ENCODE measurements at regions of chr15 and their contacts with region 1.

Region 1: DNA sequence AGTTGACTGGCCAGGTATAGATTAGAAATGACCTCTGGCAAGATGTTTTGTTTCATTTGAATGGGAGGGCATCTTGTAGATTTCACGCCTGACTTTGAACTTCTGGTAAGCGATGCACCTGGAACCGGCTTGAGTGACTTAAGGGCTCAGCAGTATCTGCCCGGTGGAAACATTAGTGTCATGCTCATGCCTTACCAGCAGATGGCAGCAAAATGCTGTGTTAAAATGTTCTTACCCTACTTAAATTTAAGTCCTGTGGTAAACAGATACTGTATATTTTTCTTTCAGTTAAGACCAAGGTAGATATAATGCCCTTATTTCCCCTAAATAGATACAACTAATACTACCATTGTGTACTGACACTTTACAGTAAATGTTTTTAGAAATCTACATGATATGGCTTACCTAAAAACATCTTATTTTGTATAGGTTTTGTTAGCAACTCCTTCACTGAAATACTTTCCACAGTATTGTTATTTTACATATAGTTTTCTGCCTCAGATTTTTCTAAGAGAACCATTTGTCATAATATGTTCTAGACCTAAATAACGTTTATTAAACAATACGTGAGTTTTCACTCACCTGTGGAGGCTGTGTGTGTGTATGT is 25.5 kb downstream of the ASB7 start:
- DNase-seq: no peak

Region 2: GRCh38 chr15:100508641-100509300 is 119.1 kb before region 1 on chr15:
- intact Hi-C with region 1: no loop called
- DNase-seq: no peak

Region 3: DNA sequence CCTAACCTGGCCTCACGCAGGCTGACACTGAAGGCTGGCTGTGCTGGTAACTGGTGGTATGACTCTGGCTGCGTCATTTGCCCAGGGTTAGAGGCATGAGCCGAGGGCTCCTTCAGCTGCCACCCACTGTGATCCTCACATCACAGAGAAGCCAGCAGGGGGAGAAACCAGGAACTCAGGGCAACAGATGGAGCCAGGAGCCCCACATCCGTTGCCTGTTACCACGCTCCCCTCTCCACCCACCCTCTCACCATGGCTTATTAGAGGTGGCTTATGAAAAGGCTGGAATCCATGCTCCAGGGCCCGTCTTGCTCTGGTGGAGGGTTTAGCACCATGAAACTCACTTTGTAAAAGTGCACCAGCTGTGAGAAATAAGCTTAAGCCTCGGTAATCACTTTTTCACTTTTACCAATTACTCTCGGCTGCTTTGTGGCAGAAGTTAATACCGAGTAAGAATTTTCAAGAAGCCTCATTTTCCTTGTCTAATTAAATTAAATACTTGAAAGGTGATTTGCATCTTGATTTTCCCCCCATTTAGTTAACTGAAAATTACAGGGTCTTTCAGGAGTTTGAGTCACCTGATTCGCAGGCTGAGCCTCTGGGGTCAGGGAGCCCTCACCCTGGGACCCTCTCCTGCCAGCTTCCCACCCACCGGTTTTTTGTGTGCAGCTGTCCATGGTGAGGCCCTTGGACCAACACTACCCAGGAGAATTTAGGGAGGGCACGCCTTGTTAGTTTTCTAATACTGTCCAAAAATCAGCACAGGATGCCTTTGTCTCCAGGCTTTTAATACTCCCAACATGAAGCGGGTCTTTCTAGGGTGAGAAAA is 35.4 kb after region 1 on chr15:
- intact Hi-C with region 1: no loop called
- DNase-seq: no peak

Region 4: DNA sequence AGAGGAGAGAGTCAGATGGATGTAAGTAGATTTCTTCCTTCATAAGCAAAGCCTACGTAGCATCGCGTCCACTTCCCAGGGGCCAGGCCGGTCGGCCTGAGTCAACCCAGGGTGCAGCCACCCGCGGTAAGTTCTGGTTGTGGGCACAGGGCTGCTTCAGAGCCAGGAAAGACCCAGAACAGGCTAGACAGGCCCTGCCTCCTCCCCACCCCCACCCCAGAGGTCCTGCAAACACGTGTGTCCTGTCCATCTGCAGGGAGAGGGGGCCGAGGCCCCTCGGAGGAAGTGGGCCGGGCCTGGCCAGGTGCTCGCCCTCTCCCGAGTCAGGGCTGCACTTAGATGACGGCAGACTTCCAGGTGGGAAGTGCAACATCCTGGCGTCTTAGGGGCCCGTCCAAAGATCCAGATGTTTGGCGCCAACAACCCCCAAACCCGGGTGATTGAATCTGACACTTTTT is 151.0 kb after region 1 on chr15:
- intact Hi-C with region 1: no loop called
- DNase-seq: peak; percentile 60

Region 5: DNA sequence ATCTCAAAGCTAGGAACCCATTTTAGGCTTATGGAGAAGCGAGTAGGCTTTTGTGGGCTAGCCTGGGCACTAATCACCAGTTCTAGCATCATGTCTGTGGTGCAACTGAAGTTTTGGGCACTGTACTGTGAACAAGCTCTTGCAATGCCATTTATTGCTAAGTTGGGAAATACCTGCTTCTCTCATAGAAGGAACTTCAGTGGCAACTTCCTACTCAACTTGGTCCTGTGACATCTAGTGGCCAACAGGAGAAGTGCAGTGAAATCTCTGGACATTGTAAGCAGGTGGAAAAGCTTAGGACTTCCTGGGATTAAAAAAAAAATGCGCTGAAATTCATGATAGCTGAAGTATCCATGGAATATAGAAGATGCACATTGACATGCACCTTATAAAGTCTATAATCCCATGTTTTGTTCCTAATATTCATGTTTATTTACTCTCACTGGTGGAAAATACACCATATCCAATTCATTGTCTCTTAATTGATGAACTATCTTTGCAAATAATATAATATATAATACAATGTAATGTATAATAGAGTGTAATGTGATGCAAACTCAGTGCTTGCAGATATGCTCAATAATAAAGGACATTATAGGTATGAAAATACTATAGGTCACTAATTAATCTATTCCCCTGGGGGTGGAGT is 245.3 kb after region 1 on chr15:
- intact Hi-C with region 1: loop called in 1 of 2 experiments (anchors 5 kb)
- DNase-seq: no peak

Region 6: GRCh38 chr15:101008158-101009139 is 380.6 kb after region 1 on chr15:
- intact Hi-C with region 1: loop called (anchors 10 kb)
- DNase-seq: peak; percentile 95